Activated CD4-positive, alpha-beta memory T cell treated with anti-CD3 and anti-CD28 coated beads for 36 hours (primary cell): ENCODE measurements at regions of chr6 and their contacts with region 1.

Region 1: DNA sequence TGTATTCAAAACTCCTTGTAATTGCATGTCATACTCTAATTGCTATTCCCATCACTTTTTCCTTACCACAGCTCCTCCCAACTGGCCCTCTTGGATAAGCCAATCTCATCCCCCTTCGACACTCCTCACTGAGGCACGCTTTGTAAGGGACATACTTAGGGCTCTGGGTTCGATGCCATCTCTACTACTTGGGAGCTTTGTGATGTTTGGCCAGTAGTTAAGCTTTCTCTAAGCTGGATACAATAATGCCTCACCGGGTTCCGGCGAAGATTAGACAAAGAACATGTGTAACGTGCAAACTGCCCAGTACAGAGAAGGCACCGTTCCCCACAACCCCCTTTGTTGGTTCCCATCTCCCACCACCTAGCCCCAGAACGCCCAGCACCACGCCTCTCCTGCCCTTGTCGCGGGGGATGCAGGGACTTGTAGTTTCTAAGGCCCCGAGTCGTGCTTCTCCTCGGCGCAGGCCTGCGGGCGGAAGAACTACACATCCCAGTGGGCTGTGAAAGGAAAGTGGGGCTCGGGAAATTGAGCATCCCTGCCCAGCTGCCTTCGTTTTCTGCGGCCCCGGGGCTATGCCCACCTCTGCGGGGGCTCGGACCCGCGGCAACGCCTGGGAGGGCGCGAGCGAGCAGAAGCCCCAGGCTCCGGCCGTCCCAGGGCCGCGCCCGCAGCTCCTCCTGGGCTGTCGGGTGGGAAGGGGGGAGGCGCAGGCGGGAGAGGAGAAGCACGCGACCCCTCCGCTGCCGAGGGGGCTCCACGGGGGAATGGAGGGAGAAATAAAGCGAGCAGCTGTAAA is 1.1 kb upstream of the ZDHHC14 start:
- DNase-seq: peak; percentile 93
- H3K4me3 Mint-ChIP-seq: peak overlapping the region; percentile 78
- H3K27ac Mint-ChIP-seq: peak overlapping the region; percentile 71
- H3K4me1 Mint-ChIP-seq: peaks cover 31% of the 10 kb centered on the region
- H3K27me3 Mint-ChIP-seq: peaks cover 9% of the 10 kb centered on the region

Region 2: GRCh38 chr6:156876302-156876701 is 503.6 kb before region 1 on chr6:
- CTCF ChIA-PET with region 1: no interaction called
- POLR2A ChIA-PET with region 1: no interaction called
- intact Hi-C with region 1: no loop called
- DNase-seq: no peak
- H3K4me3 Mint-ChIP-seq: no peak overlapping the region
- H3K27ac Mint-ChIP-seq: no peak overlapping the region
- H3K4me1 Mint-ChIP-seq: peaks cover 56% of the 10 kb centered on the region
- H3K27me3 Mint-ChIP-seq: no peaks in the 10 kb centered on the region

Region 3: GRCh38 chr6:157428427-157429202 is 48.8 kb after region 1 on chr6:
- CTCF ChIA-PET with region 1: no interaction called
- POLR2A ChIA-PET with region 1: no interaction called
- intact Hi-C with region 1: loop called (anchors 1 kb)
- DNase-seq: peak; percentile 88
- H3K4me3 Mint-ChIP-seq: no peak overlapping the region
- H3K27ac Mint-ChIP-seq: peak overlapping the region; percentile 74
- H3K4me1 Mint-ChIP-seq: peaks cover 37% of the 10 kb centered on the region
- H3K27me3 Mint-ChIP-seq: peaks cover 10% of the 10 kb centered on the region

Region 4: DNA sequence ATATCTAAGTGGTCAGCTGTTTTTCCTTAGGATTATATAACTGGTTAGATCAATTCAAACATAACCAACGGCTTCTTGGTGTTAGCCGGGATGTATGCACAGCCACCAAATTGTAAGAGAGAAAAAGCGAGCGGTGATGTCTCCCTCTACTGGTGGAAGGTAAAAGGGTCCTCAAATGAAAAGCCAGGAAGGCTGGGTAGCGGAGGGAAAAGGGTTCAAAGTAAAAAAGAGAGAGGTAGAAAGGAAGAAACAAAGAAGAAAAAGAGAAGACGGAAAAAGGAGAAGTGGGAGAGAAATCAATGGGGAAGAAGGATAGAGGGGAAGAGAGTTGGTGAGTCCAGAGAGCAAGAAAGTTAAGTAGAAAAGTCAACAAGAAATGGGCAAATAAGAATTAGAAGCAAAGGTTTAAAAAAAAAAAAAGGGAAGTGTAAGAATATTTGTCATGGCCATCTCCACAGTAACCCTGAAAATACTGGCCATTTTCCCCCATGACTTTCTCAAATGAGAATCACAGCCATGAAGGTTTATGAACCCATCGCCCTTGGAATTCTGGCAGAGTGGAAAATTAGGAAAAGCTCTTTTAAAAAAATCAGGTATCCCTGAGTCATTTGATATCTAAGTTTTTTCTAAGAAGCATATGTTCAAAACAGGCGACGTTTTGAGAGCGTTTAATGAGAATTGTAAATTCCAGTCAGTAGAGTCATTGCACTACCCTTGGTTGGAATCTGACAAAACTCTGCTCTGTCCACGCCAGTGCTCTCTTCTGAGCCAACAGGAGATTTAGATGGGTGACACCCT is 287.6 kb after region 1 on chr6:
- CTCF ChIA-PET with region 1: interaction called, 3 read pairs
- POLR2A ChIA-PET with region 1: no interaction called
- intact Hi-C with region 1: loop called (anchors 5 kb)
- DNase-seq: peak; percentile 68
- H3K4me3 Mint-ChIP-seq: no peak overlapping the region
- H3K27ac Mint-ChIP-seq: no peak overlapping the region
- H3K4me1 Mint-ChIP-seq: peaks cover 13% of the 10 kb centered on the region
- H3K27me3 Mint-ChIP-seq: peaks cover 7% of the 10 kb centered on the region